Mammary epithelial cell (primary cell): ENCODE measurements at regions of chr10 and their contacts with region 1.

Region 1: GRCh38 chr10:93816123-93816747 is 58.5 kb downstream of the LGI1 start:
- DNase-seq: peak; percentile 51
- H3K4me3 ChIP-seq: no peak overlapping the region
- H3K27ac ChIP-seq: no peak overlapping the region
- H3K4me1 ChIP-seq: no peaks in the 10 kb centered on the region
- H3K27me3 ChIP-seq: peaks cover 8% of the 10 kb centered on the region
- CTCF ChIP-seq: peak; percentile 58 to 84

Region 2: DNA sequence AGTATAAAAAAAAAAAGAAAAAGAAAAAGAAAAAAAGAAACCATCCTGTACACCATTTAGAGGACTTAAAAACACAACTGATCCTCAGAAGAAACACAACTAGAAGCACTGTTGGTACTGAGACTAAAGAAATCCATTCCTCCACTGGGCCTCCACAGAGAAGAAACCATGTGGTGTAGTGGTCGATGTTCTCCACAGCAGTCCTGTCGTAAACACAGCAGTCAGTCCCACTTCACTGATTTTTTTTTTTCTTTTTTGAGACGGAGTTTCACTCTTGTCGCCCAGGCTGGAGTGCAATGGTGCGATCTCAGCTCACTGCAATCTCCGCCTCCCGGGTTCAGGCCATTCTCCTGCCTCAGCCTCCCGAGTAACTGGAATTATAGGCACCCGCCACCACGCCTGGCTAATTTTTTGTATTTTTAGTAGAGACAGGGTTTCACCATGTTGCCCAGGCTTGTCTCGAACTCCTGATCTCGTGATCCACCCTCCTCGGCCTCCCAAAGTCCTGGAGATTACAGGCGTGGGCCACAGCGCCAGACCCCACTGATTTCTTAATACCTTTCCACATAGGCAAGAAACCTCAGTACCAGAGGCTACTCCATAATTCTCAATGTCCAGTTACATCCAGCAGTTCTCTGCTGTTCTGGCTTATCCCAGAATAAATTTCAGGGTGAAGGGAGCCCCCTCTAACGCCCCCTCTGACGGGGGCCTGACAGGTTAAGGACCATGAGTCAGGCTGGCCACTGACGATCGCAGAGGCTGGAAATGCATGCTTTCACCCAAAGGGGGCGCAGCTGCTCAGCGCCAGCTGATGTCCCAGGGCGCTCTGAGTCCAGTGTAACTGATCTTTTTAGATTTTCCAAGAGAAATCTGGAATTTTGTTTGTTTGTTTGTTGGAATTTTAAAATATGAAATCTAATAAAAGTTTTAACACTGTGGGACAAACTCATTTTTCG is 274.6 kb before region 1 on chr10:
- CTCF ChIA-PET with region 1: no interaction called
- dilution Hi-C with region 1: no loop called
- in situ Hi-C with region 1: no loop called
- intact Hi-C with region 1: loop called (anchors 2 kb)
- DNase-seq: no peak
- H3K4me3 ChIP-seq: no peak overlapping the region
- H3K27ac ChIP-seq: no peak overlapping the region
- H3K4me1 ChIP-seq: no peaks in the 10 kb centered on the region
- H3K27me3 ChIP-seq: no peaks in the 10 kb centered on the region
- CTCF ChIP-seq: peak; percentile 69 to 75

Region 3: GRCh38 chr10:93702211-93703001 is 113.8 kb before region 1 on chr10 and contains the start of gene FRA10AC1:
- CTCF ChIA-PET with region 1: interaction called, 3 read pairs
- dilution Hi-C with region 1: no loop called
- in situ Hi-C with region 1: loop called (anchors 5 to 10 kb)
- intact Hi-C with region 1: loop called (anchors 1 kb)
- DNase-seq: peak; percentile 88
- H3K4me3 ChIP-seq: peak within 1 kb of the TSS; percentile 74 to 79 (median 77)
- H3K27ac ChIP-seq: peak within 1 kb of the TSS; percentile 62
- H3K4me1 ChIP-seq: peaks cover 17% of the 10 kb centered on the region
- H3K27me3 ChIP-seq: no peaks in the 10 kb centered on the region
- CTCF ChIP-seq: peak; percentile 37 to 56
- total RNA-seq, gene FRA10AC1: 10.8 to 15.9 TPM

Region 4: GRCh38 chr10:93746844-93747284 is 69.4 kb before region 1 on chr10:
- CTCF ChIA-PET with region 1: no interaction called
- dilution Hi-C with region 1: no loop called
- in situ Hi-C with region 1: no loop called
- intact Hi-C with region 1: loop called (anchors 1 kb)
- DNase-seq: peak; percentile 97
- H3K4me3 ChIP-seq: no peak overlapping the region
- H3K27ac ChIP-seq: peak overlapping the region; percentile 39
- H3K4me1 ChIP-seq: peaks cover 3% of the 10 kb centered on the region
- H3K27me3 ChIP-seq: no peaks in the 10 kb centered on the region
- CTCF ChIP-seq: peak; percentile 47 to 57

Region 5: GRCh38 chr10:93859049-93859655 is 42.9 kb after region 1 on chr10:
- CTCF ChIA-PET with region 1: no interaction called
- dilution Hi-C with region 1: no loop called
- in situ Hi-C with region 1: no loop called
- intact Hi-C with region 1: loop called (anchors 1 kb)
- DNase-seq: no peak
- H3K4me3 ChIP-seq: no peak overlapping the region
- H3K27ac ChIP-seq: no peak overlapping the region
- H3K4me1 ChIP-seq: no peaks in the 10 kb centered on the region
- H3K27me3 ChIP-seq: peaks cover 3% of the 10 kb centered on the region
- CTCF ChIP-seq: peak; percentile 22 to 40

Region 6: DNA sequence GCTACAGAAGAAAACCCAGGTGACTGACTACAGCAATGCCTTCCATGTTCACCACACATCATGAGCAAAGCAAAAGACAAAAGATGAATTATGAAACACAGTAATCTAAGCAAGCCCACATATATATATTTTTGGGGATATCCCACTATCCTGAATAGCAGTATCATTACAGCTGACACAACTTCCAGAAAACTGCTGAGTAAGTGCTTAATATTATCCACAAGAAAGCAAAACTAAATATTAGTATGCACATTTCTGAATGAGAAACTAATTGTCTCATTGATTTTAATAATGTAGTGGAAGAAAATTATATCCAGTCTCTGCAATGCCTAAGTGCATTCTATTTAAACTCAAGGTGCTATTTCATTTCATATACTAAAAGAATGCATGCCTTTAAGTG is 63.0 kb after region 1 on chr10:
- CTCF ChIA-PET with region 1: no interaction called
- dilution Hi-C with region 1: no loop called
- in situ Hi-C with region 1: no loop called
- intact Hi-C with region 1: no loop called
- DNase-seq: no peak
- H3K4me3 ChIP-seq: no peak overlapping the region
- H3K27ac ChIP-seq: no peak overlapping the region
- H3K4me1 ChIP-seq: no peaks in the 10 kb centered on the region
- H3K27me3 ChIP-seq: peaks cover 2% of the 10 kb centered on the region
- CTCF ChIP-seq: no peak

Region 7: DNA sequence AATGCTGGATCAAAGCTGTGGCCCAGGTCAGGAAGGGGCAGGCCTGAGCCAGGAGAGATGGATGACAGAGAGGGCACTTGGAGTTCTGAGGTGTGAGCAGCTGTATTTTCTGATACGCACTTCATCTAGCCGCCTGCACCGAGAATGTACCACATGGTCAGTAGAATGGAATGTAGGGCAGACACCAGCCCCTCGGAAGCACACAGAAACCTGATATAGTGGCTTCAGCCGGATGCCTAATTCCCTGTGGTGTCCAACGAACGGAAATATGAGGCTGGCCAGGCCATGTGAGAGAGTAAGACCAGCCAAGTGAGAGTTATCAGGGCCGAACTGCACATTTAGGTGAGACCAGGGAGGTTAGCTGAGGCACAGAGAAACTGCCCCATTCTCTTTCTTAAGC is 130.8 kb after region 1 on chr10:
- CTCF ChIA-PET with region 1: no interaction called
- dilution Hi-C with region 1: no loop called
- in situ Hi-C with region 1: no loop called
- intact Hi-C with region 1: no loop called
- DNase-seq: no peak
- H3K4me3 ChIP-seq: no peak overlapping the region
- H3K27ac ChIP-seq: no peak overlapping the region
- H3K4me1 ChIP-seq: no peaks in the 10 kb centered on the region
- H3K27me3 ChIP-seq: peaks cover 2% of the 10 kb centered on the region
- CTCF ChIP-seq: no peak

Region 8: GRCh38 chr10:94225589-94225988 is 409.4 kb after region 1 on chr10:
- CTCF ChIA-PET with region 1: no interaction called
- dilution Hi-C with region 1: no loop called
- in situ Hi-C with region 1: no loop called
- intact Hi-C with region 1: loop called (anchors 5 kb)
- DNase-seq: no peak
- H3K4me3 ChIP-seq: no peak overlapping the region
- H3K27ac ChIP-seq: no peak overlapping the region
- H3K4me1 ChIP-seq: no peaks in the 10 kb centered on the region
- H3K27me3 ChIP-seq: no peaks in the 10 kb centered on the region
- CTCF ChIP-seq: peak; percentile 20 to 39

Region 9: GRCh38 chr10:94320285-94320914 is 504.2 kb after region 1 on chr10:
- CTCF ChIA-PET with region 1: no interaction called
- dilution Hi-C with region 1: no loop called
- in situ Hi-C with region 1: no loop called
- intact Hi-C with region 1: loop called (anchors 5 kb)
- DNase-seq: peak; percentile 37
- H3K4me3 ChIP-seq: no peak overlapping the region
- H3K27ac ChIP-seq: no peak overlapping the region
- H3K4me1 ChIP-seq: no peaks in the 10 kb centered on the region
- H3K27me3 ChIP-seq: no peaks in the 10 kb centered on the region
- CTCF ChIP-seq: peak; percentile 73 to 79